Common myeloid progenitor, CD34-positive (primary cell): ENCODE measurements at regions of chr10 and their contacts with region 1.

Region 1: GRCh38 chr10:93376372-93377293 is 105.5 kb downstream of the MYOF start:
- DNase-seq: peak; percentile 79 to 86 (median 81)
- H3K4me3 ChIP-seq: no peak overlapping the region
- H3K27ac ChIP-seq: no peak overlapping the region
- H3K4me1 ChIP-seq: no peaks in the 10 kb centered on the region
- H3K27me3 ChIP-seq: no peaks in the 10 kb centered on the region

Region 2: GRCh38 chr10:93386631-93387369 is 10.2 kb after region 1 on chr10:
- CTCF ChIA-PET with region 1: interaction called, 47 read pairs
- POLR2A ChIA-PET with region 1: no interaction called
- DNase-seq: peak; percentile 21 to 68 (median 61)
- H3K4me3 ChIP-seq: peak overlapping the region in 3 of 7 experiments; percentile 6 to 37 (median 11)
- H3K27ac ChIP-seq: no peak overlapping the region
- H3K4me1 ChIP-seq: peaks cover 0 to 41% (median 16%) of the 10 kb centered on the region in 4 experiments
- H3K27me3 ChIP-seq: no peaks in the 10 kb centered on the region

Region 3: DNA sequence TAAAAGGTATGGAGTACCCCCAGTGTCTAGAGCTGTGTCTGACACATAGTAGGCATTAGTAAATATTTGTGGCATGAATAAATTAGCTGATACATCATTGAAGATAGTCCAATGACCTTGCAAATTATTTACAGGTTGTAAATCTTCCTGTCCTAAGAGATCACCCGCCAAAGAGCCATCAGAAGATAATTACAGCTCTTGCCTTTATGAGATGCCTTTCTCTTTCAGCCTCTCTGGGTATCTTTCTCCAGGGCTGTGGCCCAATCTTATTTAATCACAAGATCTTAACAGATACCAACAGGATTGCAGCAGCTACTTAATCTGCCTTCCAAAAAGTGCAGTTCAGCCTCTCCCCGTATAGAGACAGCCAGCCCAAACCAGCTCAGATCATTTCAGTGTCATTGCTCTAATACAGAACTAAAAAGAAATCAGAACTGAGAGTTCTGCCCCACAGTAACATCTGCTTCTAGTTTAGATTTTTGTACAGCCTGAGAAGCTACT is 64.0 kb after region 1 on chr10:
- CTCF ChIA-PET with region 1: interaction called, 11 read pairs
- POLR2A ChIA-PET with region 1: no interaction called
- DNase-seq: no peak
- H3K4me3 ChIP-seq: no peak overlapping the region
- H3K27ac ChIP-seq: no peak overlapping the region
- H3K4me1 ChIP-seq: peaks cover 0 to 25% (median 7%) of the 10 kb centered on the region in 4 experiments
- H3K27me3 ChIP-seq: no peaks in the 10 kb centered on the region

Region 4: GRCh38 chr10:93482145-93482834 is 105.7 kb after region 1 on chr10 and contains the start of gene MYOF:
- CTCF ChIA-PET with region 1: interaction called, 375 read pairs
- POLR2A ChIA-PET with region 1: interaction called, 4 read pairs
- DNase-seq: peak; percentile 81 to 91 (median 89)
- H3K4me3 ChIP-seq: peak within 1 kb of the TSS in 6 of 7 experiments; percentile 70 to 91 (median 74)
- H3K27ac ChIP-seq: no peak within 1 kb of the TSS
- H3K4me1 ChIP-seq: peaks cover 0 to 11% (median 6%) of the 10 kb centered on the region in 4 experiments
- H3K27me3 ChIP-seq: peaks cover 0 to 18% (median 7%) of the 10 kb centered on the region in 5 experiments

Region 5: GRCh38 chr10:93503075-93503474 is 126.4 kb after region 1 on chr10:
- CTCF ChIA-PET with region 1: interaction called, 24 read pairs
- POLR2A ChIA-PET with region 1: no interaction called
- DNase-seq: no peak
- H3K4me3 ChIP-seq: no peak overlapping the region
- H3K27ac ChIP-seq: no peak overlapping the region
- H3K4me1 ChIP-seq: peaks cover 0 to 6% (median 4%) of the 10 kb centered on the region in 4 experiments
- H3K27me3 ChIP-seq: no peaks in the 10 kb centered on the region

Region 6: DNA sequence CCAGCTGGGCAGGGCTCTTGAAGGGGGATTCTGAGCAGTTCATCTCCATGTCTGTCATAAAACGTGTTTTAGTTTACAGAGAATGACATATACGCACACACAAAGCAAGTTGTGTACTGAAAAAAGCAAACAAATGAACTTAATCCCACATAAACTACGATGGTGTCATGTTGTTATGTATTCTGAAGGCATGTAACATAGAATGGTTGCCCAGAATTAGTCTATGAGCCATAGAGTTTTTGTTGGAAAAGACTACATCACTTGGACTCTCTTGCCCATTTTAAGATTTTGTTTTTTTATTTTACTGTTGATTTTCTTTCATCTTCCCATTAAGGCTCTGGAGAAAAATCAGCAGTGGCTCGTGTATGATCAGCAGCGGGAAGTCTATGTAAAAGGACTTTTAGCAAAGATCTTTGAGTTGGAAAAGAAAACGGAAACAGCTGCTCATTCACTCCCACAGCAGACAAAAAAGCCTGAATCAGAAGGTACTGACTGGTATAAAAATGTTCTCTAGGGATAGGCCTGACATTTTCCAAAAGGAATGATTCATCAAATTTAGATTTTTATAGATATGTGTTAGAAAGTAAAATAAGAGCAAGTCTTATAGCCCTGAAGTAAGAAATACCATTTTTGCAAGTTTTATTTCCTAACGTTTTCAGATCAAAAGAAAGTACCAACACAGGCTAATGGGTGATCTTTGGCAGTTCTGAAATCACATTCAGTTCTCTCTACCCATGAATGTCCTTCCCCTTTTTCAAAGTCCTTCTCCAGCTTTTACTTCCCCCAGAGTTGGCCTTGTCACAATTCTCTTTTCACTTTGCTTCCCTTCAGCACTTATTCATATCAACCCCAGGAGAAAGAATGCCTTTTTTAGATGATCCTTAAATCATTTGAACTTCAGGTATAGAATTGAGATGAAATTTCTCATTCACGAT is 138.7 kb after region 1 on chr10:
- CTCF ChIA-PET with region 1: interaction called, 51 read pairs
- POLR2A ChIA-PET with region 1: no interaction called
- DNase-seq: peak in 2 of 3 donors; percentile 43 to 55
- H3K4me3 ChIP-seq: no peak overlapping the region
- H3K27ac ChIP-seq: no peak overlapping the region
- H3K4me1 ChIP-seq: peaks cover 0 to 2% (median 1%) of the 10 kb centered on the region in 4 experiments
- H3K27me3 ChIP-seq: no peaks in the 10 kb centered on the region